Heart left ventricle (tissue), 16 donors: ENCODE measurements at regions of chr1 and their contacts with region 1.

Region 1: GRCh38 chr1:235513495-235514366 is 9.5 kb upstream of the B3GALNT2 start:
- DNase-seq: peak in 2 of 5 donors; percentile 19 to 23
- ATAC-seq: peak in 1 of 4 donors; percentile 56
- H3K4me3 ChIP-seq: no peak overlapping the region
- H3K27ac ChIP-seq: no peak overlapping the region
- H3K4me1 ChIP-seq: no peaks in the 10 kb centered on the region
- H3K27me3 ChIP-seq: no peaks in the 10 kb centered on the region
- CTCF ChIP-seq: peak; percentile 81 to 95 (median 92)
- POLR2A ChIP-seq: no peak

Region 2: GRCh38 chr1:235776396-235776795 is 262.7 kb after region 1 on chr1:
- intact Hi-C with region 1: loop called in 7 of 10 experiments (anchors 5 kb)
- DNase-seq: no peak
- ATAC-seq: no peak
- H3K4me3 ChIP-seq: no peak overlapping the region
- H3K27ac ChIP-seq: no peak overlapping the region
- H3K4me1 ChIP-seq: no peaks in the 10 kb centered on the region
- H3K27me3 ChIP-seq: no peaks in the 10 kb centered on the region
- CTCF ChIP-seq: no peak
- POLR2A ChIP-seq: no peak

Region 3: DNA sequence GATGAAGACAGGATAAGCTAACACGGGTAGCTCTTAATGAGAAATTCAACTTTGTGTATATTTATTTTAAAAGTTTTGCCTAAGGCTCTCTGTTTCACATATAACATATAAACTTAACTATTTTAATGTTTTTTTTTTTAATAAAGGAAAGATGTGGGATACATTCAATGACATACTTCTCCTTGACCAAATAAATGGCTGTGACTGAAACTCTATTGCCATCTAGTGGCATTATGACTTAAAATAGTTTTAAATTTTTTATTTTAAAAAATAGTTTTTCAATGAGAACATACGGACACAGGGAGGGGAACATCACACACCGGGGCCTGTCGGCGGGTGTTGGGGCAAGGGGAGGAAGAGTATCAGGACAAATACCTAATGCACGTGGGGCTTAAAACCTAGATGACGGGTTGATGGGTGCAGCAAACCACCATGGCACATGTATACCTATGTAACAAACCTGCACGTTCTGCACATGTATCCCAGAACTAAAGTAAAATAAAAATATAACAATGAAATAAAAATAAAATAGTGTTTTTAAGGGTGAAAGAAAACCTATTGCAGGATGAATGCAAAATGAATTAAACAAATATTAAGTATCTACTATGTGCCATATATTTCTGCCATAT is 269.5 kb after region 1 on chr1:
- intact Hi-C with region 1: loop called (anchors 1 to 5 kb)
- DNase-seq: no peak
- ATAC-seq: no peak
- H3K4me3 ChIP-seq: no peak overlapping the region
- H3K27ac ChIP-seq: no peak overlapping the region
- H3K4me1 ChIP-seq: peaks cover 0 to 3% (median 0%) of the 10 kb centered on the region in 12 donors
- H3K27me3 ChIP-seq: no peaks in the 10 kb centered on the region
- CTCF ChIP-seq: peak; percentile 27 to 65 (median 54)
- POLR2A ChIP-seq: no peak

Region 4: DNA sequence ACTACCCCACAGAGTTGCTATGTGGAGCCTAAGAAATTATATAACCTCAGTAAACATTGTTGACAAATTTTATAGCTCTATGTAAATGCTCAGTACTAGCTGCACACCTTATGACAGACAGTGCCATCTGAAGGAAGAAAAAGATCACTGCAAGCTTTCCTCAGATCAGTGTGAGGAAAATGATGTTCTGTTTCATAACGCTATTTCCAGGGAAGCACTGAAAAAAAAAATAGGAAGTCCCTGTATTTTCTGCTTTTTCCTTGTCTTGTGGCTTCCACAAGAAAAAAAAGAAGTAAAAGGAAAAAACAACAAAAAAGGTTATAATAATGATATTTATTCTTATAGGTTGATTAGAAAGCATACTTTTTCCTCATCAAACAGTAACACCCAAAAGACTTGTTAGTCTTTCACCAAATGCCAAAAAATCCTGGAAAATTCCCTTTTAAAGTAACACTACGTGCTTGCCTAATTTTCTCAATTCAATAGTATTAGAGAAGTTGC is 329.8 kb after region 1 on chr1:
- intact Hi-C with region 1: loop called in 1 of 10 experiments (anchors 10 kb)
- DNase-seq: no peak
- ATAC-seq: peak; percentile 36 to 71 (median 70)
- H3K4me3 ChIP-seq: no peak overlapping the region
- H3K27ac ChIP-seq: peak overlapping the region in 1 of 12 donors; percentile 5
- H3K4me1 ChIP-seq: peaks cover 0 to 75% (median 35%) of the 10 kb centered on the region in 12 donors
- H3K27me3 ChIP-seq: no peaks in the 10 kb centered on the region
- CTCF ChIP-seq: peak; percentile 22 to 71 (median 48)
- POLR2A ChIP-seq: no peak